CD14-positive monocyte (primary cell): ENCODE measurements at regions of chr19 and their contacts with region 1.

Region 1: GRCh38 chr19:51726049-51726448 is 2.3 kb upstream of the HAS1 start:
- DNase-seq: no peak
- H3K4me3 ChIP-seq: no peak overlapping the region
- H3K4me3 Mint-ChIP-seq: peak overlapping the region in 1 of 2 donors; percentile 75
- H3K27ac ChIP-seq: no peak overlapping the region
- H3K27ac Mint-ChIP-seq: peak overlapping the region in 1 of 7 donors; percentile 68
- H3K4me1 ChIP-seq: no peaks in the 10 kb centered on the region
- H3K4me1 Mint-ChIP-seq: peaks cover 11% of the 10 kb centered on the region
- H3K27me3 ChIP-seq: peaks cover 32 to 69% of the 10 kb centered on the region in 2 donors
- H3K27me3 Mint-ChIP-seq: peaks cover 53 to 75% (median 72%) of the 10 kb centered on the region in 3 donors
- CTCF ChIP-seq: no peak

Region 2: DNA sequence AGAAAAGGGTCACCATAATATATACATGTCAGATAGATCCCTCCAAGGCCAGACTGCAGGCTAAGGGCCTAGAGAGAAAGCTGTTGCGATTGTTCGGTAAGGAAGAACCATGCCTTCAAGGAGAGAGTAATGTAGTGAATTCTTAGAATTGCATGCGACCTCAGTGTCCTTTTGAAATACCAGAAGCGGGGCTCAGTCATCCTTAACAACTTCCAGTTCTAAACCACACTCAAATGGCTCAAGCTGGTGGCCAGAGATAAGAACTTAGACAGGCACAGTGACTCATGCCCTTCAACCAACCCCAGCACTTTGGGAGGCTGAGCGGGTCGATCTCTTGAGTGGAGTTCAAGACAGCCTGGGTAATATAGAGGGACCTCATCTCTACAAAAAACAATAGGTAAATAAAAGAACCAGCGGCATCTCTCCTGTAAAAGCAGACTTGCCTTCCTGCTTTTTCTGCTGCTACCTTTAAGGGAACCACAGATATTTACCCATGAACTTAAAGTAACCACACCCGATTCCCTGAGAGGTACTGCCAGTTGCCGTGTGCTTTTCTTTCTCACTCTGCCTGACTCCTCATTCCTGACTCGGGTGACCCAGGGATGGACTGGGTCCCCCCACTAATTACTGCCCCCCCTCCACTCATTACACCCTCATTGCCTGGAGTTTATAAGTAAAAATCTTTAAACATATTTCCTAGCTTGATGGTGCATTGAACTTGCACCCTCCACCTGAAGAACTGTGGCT is 179.2 kb before region 1 on chr19:
- intact Hi-C with region 1: no loop called
- DNase-seq: peak; percentile 29 to 59 (median 47)
- H3K4me3 ChIP-seq: peak overlapping the region in 1 of 3 experiments; percentile 7
- H3K4me3 Mint-ChIP-seq: peak overlapping the region in 1 of 2 donors; percentile 70
- H3K27ac ChIP-seq: no peak overlapping the region
- H3K27ac Mint-ChIP-seq: peak overlapping the region in 2 of 7 donors; percentile 13 to 32
- H3K4me1 ChIP-seq: peaks cover 48 to 57% of the 10 kb centered on the region in 2 donors
- H3K4me1 Mint-ChIP-seq: peaks cover 62% of the 10 kb centered on the region
- H3K27me3 ChIP-seq: peaks cover 12 to 58% of the 10 kb centered on the region in 2 donors
- H3K27me3 Mint-ChIP-seq: peaks cover 66 to 85% (median 66%) of the 10 kb centered on the region in 3 donors
- CTCF ChIP-seq: no peak

Region 3: DNA sequence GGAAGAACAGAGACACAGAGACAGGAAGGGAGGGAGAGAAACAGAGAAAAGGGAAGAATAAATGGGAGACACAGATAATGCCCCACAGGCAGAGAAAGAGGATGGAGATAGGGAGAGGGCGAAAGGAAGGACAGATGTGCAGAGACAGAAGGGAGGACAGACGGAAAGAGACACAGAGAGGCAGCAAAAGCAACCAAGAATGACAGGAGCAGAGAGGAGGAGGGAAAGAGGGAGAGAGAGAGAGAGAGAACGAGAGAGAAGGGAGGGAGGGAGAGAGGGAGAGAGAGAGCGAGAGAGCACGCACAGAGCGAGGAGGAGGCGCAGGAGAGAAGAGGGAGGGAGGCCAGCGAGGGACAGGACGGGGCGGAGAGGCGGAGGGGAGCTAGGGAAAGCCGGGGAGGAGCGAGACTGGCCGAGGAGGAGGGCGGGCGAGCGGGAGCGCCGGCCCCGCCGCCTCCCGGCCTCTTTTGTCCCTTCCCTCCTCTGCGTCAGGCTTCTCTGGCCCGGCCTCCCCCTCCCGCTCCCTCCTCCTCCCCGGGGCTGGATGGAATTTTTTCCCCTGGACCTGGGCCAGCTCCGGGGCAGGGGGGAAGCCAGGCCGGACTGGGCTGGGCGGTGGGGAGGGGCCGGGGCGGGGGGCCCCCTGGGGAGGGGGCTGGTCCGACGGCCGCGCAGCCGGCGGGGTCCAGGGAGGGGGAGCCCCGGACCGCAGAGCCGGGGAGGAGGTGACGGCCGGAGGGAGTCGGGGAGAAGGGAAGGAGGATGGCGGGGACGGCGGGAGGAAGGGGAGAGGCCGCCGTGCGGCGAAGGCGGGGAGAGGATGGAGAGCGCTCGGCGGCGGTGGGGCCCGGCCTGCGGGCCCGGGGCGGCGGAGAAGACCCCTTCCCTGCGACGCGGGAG is 37.1 kb before region 1 on chr19:
- intact Hi-C with region 1: loop called in 1 of 2 experiments (anchors 5 kb)
- DNase-seq: peak in 1 of 3 donors; percentile 31
- H3K4me3 ChIP-seq: peak overlapping the region in 1 of 3 experiments; percentile 57
- H3K4me3 Mint-ChIP-seq: peak overlapping the region; percentile 62 to 94
- H3K27ac ChIP-seq: no peak overlapping the region
- H3K27ac Mint-ChIP-seq: peak overlapping the region in 1 of 7 donors; percentile 60
- H3K4me1 ChIP-seq: peaks cover 23 to 37% of the 10 kb centered on the region in 2 donors
- H3K4me1 Mint-ChIP-seq: peaks cover 31% of the 10 kb centered on the region
- H3K27me3 ChIP-seq: peaks cover 32 to 87% of the 10 kb centered on the region in 2 donors
- H3K27me3 Mint-ChIP-seq: peaks cover 63 to 85% (median 69%) of the 10 kb centered on the region in 3 donors
- CTCF ChIP-seq: no peak

Region 4: DNA sequence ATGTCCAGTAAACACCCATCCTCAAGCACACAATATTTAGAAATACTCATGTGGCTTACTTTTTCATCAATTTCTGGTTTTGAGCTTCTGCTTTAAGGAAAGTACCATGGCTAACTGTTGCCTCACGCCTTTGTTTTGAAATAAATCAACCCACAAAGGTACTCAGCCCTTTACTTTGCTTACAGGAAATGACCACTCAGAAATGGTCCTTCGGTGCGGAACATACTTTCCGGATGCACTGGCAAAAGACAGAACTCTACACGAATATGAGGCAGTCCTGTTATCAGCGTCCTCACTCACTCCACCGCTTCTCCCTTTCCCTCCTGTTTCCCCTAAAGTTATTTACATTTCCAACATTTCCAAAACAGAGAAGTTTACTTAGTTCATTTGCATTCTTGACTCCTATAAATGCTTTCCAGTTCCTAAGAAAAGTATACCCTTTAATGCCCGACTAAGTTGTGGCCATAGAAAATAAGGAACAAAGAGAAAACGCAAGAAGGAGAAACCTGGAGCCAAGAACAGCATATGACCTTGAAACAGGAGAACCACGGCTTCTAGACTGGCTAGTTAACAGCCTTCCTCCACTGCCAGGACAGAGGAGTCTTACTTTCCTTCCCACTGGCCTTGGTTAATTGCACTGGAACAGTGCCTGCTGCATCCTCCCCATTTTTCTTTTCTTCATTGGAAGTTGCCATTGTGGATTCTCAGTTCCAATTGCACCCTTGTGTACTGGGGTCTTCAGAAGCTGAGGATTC is 45.5 kb after region 1 on chr19:
- intact Hi-C with region 1: no loop called
- DNase-seq: peak; percentile 89 to 97 (median 95)
- H3K4me3 ChIP-seq: peak overlapping the region in 1 of 3 experiments; percentile 56
- H3K4me3 Mint-ChIP-seq: peak overlapping the region in 1 of 2 donors; percentile 72
- H3K27ac ChIP-seq: peak overlapping the region; percentile 90 to 94
- H3K27ac Mint-ChIP-seq: peak overlapping the region; percentile 93 to 98 (median 97)
- H3K4me1 ChIP-seq: peaks cover 58 to 76% of the 10 kb centered on the region in 2 donors
- H3K4me1 Mint-ChIP-seq: peaks cover 69% of the 10 kb centered on the region
- H3K27me3 ChIP-seq: no peaks in the 10 kb centered on the region
- H3K27me3 Mint-ChIP-seq: peaks cover 0 to 9% (median 3%) of the 10 kb centered on the region in 3 donors
- CTCF ChIP-seq: no peak

Region 5: DNA sequence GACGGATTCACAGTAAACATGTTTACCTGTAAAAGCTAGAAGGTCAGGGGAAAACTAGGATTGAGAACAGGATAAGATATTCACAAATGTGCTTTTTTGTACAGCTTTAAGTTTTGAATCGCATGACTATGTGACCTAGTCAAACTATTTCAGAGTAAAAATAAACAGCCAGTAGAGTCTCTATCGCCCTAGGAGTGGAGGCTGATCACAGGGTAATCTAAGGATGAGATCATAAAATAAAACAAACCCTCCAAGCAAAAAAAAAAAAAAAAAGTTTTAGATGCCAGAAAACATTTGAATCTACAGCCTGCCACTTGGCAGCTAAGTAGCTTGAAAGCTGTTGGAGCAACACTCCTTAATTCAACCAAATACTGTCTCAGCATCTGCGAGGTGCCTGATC is 233.7 kb after region 1 on chr19:
- intact Hi-C with region 1: no loop called
- DNase-seq: no peak
- H3K4me3 ChIP-seq: no peak overlapping the region
- H3K4me3 Mint-ChIP-seq: no peak overlapping the region
- H3K27ac ChIP-seq: no peak overlapping the region
- H3K27ac Mint-ChIP-seq: no peak overlapping the region
- H3K4me1 ChIP-seq: no peaks in the 10 kb centered on the region
- H3K4me1 Mint-ChIP-seq: no peaks in the 10 kb centered on the region
- H3K27me3 ChIP-seq: no peaks in the 10 kb centered on the region
- H3K27me3 Mint-ChIP-seq: peaks cover 0 to 1% (median 0%) of the 10 kb centered on the region in 3 donors
- CTCF ChIP-seq: no peak